ENCODE measurements at regions of chr12 and their contacts with region 1.

Region 1: DNA sequence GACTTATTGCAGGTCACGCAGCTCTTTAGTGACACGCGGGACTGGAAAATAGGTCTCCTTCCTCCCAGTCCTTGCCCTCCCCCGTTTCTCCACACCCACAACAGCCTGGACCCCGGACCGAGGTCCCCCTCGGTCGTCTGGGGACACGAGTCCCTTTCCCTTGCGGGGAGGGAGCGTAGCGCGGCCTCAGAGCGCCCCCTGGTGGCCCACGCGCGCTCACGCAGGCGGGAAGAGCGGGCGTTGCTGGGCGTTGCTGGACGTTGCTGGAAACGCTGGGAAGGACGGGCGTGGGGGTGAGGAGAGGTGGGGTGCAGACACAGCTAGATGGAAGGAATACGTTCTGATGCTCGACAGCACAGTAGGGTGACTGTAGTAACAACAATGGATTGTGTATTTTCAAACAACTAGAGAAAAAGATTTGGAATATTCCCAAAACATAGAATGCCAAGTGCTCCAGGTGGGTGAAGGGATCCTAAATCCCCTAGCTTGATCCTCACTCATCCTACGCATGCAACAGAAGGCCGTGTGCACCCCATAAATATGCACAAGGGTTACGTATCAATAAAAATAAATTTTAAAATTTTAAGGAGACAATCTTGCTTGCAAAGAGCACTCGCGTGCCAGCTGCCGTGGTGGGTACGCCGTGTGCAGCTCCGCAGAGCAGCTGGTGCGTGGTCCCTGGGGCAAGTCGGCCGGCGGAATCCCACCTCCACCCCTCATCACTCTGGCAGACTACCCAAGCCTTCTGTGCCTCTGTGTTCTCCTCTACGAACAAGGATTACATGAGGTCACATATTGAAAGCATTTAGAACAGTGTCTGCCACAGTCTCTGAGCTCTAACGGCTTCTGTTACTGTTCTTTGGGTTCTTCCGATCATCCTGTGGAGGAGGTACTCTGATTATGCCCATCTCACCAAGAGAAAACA is 87.4 kb downstream of the B4GALNT3 start:
- DNase-seq: no peak

Region 2: DNA sequence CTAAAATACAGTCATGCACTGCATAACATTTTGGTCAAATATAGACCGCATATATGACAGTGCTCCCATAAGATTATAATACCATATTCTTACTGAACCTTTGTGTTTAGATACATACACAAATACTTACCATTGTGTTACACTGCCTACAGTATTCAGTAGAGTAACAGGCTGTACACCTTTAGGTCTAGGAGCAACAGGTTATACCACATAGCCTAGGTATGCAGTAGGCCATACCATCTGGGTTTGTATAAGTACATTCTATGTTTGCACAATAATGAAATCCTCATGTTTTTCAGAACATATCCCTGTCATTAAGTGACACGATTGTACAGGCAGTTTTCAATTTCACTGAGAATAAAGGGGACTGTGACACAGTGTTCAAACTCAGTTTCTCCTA is 180.4 kb before region 1 on chr12:
- intact Hi-C with region 1: no loop called
- DNase-seq: no peak

Region 3: DNA sequence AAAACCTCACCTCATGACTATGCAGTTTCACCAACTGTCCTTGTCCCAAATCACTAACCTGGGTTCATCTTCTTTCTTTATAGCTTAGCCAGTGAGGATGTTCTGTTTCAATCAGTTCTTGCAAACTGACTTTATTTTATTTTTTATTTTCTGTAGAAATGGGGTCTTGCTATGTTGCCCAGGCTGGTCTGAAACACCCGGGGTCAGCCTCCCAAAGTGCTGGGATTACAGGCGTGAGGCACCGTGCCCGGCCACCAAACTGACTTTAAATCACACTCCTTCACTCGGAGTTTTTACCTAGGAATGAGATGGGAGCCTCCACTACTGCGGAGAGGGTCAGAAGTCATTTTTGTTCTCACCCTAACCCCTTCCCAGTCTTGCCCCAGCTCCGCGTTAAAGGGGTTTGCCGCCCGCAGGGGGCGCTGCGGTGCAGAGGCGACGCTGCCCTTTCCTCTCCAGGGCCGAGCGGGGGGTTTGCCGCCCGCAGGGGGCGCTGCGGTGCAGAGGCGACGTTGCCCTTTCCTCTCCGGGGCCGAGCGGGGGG is 94.4 kb before region 1 on chr12:
- intact Hi-C with region 1: loop called (anchors 1 kb)
- DNase-seq: no peak

Region 4: DNA sequence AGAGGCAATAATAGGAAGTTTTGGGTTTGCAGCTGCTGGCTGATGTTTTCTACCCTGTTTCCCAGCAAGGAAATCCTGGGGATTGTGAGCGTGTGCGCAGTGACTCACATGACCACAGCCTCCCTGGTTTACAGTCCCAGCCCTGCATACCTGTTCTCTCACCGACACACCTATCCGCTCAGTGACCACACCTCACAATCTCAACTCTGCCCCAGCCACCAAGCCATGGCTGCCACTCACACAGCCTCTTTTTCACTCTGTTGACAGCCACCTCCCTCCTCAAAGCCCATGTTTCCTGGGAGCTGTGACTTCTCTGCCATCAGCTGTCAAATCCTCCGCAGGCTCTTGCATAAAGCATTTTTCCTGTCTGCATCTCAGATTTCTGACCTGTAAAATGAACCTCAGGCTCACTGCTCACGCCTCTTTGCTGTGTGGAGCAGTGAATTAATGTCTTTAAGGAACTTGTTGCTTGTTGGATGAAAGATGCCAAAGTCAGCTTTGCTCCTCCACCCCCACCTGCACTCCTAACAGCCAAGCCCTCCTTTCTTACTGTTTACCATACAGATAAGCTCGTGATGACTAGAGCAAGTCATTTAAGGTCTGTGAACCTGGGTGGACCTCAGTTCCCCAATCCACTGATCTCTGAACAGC is 43.9 kb before region 1 on chr12:
- intact Hi-C with region 1: loop called (anchors 5 kb)
- DNase-seq: peak; percentile 63

Measured in cardiac septum (tissue), 1 donor.